ENCODE measurements at regions of chr4 and their contacts with region 1.

Region 1: DNA sequence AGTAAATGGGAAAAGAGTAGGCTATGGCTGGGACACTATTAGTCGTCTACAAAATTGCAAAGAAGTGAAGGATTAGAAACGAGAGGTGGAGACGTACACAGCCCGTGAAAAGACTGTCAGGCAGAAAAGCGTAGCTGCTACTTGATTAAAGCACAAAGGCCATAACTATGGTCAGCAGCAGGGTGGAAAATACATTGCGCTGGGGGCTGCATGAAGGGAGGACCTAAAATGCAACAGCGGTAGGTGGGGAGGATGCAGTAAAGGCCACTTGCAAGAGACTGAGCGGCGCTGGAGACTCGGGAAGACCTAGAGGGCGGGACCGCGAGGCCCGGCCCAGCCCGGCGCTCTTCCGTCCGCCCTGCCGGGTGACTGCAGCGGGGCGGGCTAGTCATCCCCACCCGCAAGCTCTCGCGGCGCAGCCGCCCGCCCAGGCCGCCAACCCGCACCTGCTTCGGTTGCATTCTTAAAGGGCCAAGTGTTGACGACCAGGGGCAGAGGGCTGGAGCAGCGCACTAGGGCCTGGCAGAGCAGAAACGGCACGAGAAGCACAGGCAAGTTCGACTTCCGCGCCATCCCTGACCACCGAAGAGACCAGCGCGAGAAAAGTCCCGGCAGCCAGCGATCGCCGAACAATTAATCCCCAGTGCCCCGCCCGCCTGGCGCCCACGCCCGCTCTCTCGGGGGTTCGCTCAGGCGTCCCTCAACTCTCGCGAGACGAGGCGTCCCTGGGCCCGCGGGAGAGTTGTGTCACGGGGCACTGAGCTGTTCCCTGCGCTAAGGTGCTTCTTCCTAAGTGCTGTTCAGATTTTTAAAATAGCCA is at the start of gene AGA:
- DNase-seq: peak; percentile 91
- H3K4me3 Mint-ChIP-seq: peak within 1 kb of the TSS; percentile 78
- H3K27ac Mint-ChIP-seq: peak within 1 kb of the TSS; percentile 78
- H3K4me1 Mint-ChIP-seq: no peaks in the 10 kb centered on the region
- H3K27me3 Mint-ChIP-seq: no peaks in the 10 kb centered on the region
- CTCF ChIP-seq: no peak
- total RNA-seq, gene AGA: 21.5 and 22.7 TPM in 2 replicates

Region 2: GRCh38 chr4:177229331-177229730 is 212.7 kb before region 1 on chr4:
- CTCF ChIA-PET with region 1: no interaction called
- intact Hi-C with region 1: no loop called
- DNase-seq: no peak
- H3K4me3 Mint-ChIP-seq: no peak overlapping the region
- H3K27ac Mint-ChIP-seq: no peak overlapping the region
- H3K4me1 Mint-ChIP-seq: no peaks in the 10 kb centered on the region
- H3K27me3 Mint-ChIP-seq: no peaks in the 10 kb centered on the region
- CTCF ChIP-seq: no peak

Region 3: GRCh38 chr4:177367336-177367735 is 74.7 kb before region 1 on chr4:
- CTCF ChIA-PET with region 1: no interaction called
- intact Hi-C with region 1: loop called (anchors 2 kb)
- DNase-seq: peak; percentile 32
- H3K4me3 Mint-ChIP-seq: no peak overlapping the region
- H3K27ac Mint-ChIP-seq: no peak overlapping the region
- H3K4me1 Mint-ChIP-seq: no peaks in the 10 kb centered on the region
- H3K27me3 Mint-ChIP-seq: no peaks in the 10 kb centered on the region
- CTCF ChIP-seq: no peak

Region 4: DNA sequence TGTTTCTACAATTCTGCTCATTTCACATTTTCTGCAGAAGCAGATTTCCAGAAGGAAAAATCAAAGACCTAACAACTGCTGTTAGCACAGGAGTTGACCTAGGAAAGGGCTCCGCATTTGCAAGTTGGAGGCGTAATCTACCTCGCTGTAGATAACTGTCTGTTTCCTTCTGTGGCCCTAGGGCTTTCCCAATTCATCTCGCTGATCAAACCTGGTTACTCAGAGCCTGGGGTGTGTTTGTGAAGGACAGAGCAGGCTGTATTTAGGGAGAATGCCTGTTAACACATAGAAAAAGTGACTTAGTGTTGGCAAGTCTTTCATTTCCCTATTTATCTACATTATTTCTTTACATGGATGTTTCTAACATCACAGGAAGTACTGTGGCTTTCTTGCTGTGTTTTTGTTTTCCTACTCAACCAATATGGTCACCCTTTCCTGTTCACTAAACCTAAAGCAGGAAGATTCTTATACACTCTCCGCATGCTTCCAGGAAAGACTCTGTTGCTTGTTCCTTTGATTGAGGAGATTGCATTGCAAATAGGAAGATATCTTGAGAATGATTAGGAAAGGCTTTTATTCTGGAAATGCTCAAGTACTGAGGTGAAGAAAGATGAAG is 40.2 kb before region 1 on chr4:
- CTCF ChIA-PET with region 1: no interaction called
- intact Hi-C with region 1: loop called (anchors 5 kb)
- DNase-seq: no peak
- H3K4me3 Mint-ChIP-seq: no peak overlapping the region
- H3K27ac Mint-ChIP-seq: no peak overlapping the region
- H3K4me1 Mint-ChIP-seq: peaks cover 34% of the 10 kb centered on the region
- H3K27me3 Mint-ChIP-seq: no peaks in the 10 kb centered on the region
- CTCF ChIP-seq: no peak

Region 5: DNA sequence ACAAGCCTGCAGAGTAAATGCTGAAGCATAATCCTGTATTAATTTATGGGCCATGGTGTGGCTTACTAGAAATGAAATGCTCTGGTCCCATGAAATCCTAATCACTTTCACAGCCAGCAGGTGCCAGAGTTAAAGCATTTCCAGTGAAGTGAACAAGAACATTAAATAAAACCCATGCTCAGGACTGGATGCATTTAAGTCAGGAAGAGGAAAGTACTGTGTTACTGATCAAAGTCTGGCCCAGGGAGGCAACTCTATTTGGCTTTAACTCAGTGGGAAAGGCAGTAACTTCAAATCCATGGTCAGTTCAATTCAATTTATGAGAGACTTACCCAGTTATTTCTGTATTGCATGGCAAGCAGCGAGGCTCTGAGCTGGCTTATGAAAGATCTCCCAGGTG is 28.9 kb before region 1 on chr4:
- CTCF ChIA-PET with region 1: no interaction called
- intact Hi-C with region 1: loop called (anchors 2 kb)
- DNase-seq: no peak
- H3K4me3 Mint-ChIP-seq: no peak overlapping the region
- H3K27ac Mint-ChIP-seq: peak overlapping the region; percentile 79
- H3K4me1 Mint-ChIP-seq: peaks cover 58% of the 10 kb centered on the region
- H3K27me3 Mint-ChIP-seq: no peaks in the 10 kb centered on the region
- CTCF ChIP-seq: no peak

Region 6: DNA sequence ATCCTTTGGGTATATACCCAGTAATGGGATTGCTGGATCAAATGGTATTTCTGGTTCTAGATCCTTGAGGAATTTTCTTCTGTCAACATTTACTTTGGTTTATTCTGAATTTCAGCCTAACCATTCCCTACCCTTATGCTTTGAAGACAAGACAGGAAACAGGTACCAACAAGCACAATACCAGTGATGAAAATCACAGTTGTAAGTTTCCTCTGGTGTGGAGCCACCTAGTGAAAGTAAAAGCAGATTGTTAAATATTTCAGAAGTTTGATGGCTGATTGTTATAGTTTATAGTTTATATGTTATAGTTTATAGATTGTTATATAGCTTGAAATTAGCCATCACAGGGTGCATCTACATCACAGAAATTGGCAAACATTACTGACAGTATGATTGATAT is 104.7 kb after region 1 on chr4:
- CTCF ChIA-PET with region 1: no interaction called
- intact Hi-C with region 1: loop called (anchors 2 kb)
- DNase-seq: no peak
- H3K4me3 Mint-ChIP-seq: no peak overlapping the region
- H3K27ac Mint-ChIP-seq: no peak overlapping the region
- H3K4me1 Mint-ChIP-seq: no peaks in the 10 kb centered on the region
- H3K27me3 Mint-ChIP-seq: no peaks in the 10 kb centered on the region
- CTCF ChIP-seq: no peak

Measured in Calu3 (cell line).